Breast epithelium (tissue), 4 donors: ENCODE measurements at regions of chr11 and their contacts with region 1.

Region 1: DNA sequence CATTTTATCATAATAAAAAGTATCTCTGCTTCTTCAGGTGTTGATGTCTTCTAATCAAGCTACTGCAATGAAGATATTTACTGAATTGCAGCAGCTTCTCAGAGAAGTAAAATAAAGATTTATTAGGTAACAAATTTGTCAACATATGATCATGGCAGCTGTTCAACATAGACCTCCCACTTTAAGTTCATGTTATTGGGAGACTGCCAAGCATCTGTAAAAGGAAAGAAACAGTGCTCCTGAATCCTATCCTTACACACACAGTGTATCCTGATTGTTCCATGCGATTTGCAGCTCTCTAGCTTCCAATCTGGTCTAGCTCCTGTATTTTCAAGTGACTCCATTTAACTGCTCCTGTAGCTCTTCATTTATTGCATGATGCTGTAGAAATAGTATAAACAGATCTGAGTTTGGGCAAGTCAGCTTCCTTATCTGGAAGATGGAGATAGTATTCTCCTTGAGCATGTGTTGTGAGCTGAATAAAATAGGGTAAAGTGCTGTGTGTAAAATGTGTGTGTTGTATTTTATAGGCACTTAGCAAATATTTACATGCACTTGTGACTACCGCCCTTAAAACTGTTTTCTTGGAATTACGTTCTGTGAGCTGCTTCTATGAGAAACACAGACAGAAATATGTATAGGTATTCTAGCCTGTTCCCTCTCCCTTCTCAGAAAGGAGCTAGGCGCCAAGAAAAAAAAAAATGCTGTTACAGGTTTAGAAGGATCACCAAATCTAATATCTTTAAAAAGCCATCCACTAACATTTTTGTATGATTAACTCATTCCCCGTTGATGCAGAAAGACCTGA is 290.6 kb downstream of the JRKL start:
- DNase-seq: no peak
- H3K4me3 ChIP-seq: no peak overlapping the region
- H3K27ac ChIP-seq: no peak overlapping the region
- H3K4me1 ChIP-seq: no peaks in the 10 kb centered on the region
- H3K27me3 ChIP-seq: no peaks in the 10 kb centered on the region
- CTCF ChIP-seq: no peak
- POLR2A ChIP-seq: no peak

Region 2: GRCh38 chr11:96652516-96652915 is 27.9 kb before region 1 on chr11:
- intact Hi-C with region 1: loop called (anchors 1 kb)
- DNase-seq: no peak
- H3K4me3 ChIP-seq: no peak overlapping the region
- H3K27ac ChIP-seq: no peak overlapping the region
- H3K4me1 ChIP-seq: no peaks in the 10 kb centered on the region
- H3K27me3 ChIP-seq: no peaks in the 10 kb centered on the region
- CTCF ChIP-seq: no peak
- POLR2A ChIP-seq: no peak

Region 3: DNA sequence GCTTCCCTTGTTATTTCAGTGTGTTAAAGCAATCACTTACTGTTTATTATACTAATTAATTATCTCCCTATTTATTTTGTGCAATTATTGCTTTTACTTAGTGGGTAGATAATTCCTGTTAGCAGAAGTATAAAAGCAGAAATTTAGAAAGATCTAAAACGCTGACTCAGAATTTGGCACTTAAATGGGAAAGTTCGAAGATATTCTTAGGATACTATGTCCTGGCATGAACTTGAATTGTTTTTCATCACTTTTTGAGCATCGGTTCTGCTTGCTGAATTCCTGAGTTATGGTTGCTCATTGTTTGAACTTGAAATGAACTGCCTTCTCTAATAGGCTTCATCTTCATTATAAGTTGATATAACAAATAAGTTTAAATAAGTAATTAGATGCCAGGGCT is 34.8 kb after region 1 on chr11:
- intact Hi-C with region 1: no loop called
- DNase-seq: no peak
- H3K4me3 ChIP-seq: no peak overlapping the region
- H3K27ac ChIP-seq: no peak overlapping the region
- H3K4me1 ChIP-seq: no peaks in the 10 kb centered on the region
- H3K27me3 ChIP-seq: no peaks in the 10 kb centered on the region
- CTCF ChIP-seq: no peak
- POLR2A ChIP-seq: no peak